ENCODE measurements at regions of chr5 and their contacts with region 1.

Region 1: DNA sequence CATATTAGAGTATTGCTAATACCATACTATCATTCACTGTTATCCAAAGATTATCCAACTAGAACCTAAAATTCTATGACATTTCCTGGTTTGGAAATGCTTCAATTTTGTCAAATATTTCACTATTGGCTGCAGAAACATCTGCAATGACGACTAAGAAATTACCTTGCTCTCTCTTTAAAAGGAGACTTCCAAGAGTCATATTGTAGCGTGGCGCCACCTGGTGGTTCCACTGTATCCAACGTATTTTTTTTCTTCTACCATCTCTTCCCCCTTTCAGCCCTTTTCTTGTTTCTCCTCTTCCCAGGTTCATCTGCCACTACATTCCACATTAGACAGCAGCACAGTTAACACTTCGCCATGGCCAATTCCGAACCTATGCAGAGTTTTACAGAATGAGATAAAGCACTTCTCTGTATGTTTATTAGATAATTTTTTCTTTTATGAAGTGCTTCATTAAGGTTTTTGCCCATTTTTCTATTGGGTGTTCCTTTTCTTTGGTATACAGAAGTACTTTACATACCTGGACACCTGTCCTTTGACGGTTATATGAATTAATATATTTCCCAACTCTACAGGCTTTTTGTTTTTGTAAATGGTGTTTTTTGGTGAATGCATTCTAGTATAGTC is 153.5 kb downstream of the CDC42SE2 start:
- DNase-seq: peak; percentile 67 to 78
- ATAC-seq: peak in 3 of 4 donors; percentile 57 to 76 (median 58)
- H3K4me3 ChIP-seq: no peak overlapping the region
- H3K27ac ChIP-seq: no peak overlapping the region
- H3K4me1 ChIP-seq: no peaks in the 10 kb centered on the region
- H3K27me3 ChIP-seq: no peaks in the 10 kb centered on the region
- CTCF ChIP-seq: peak; percentile 81

Region 2: GRCh38 chr5:131165119-131165727 is 252.1 kb before region 1 on chr5 and contains the start of gene HINT1:
- intact Hi-C with region 1: loop called (anchors 5 to 10 kb)
- DNase-seq: peak; percentile 92 to 96
- ATAC-seq: peak; percentile 89 to 93 (median 91)
- H3K4me3 ChIP-seq: peak within 1 kb of the TSS; percentile 85
- H3K27ac ChIP-seq: peak within 1 kb of the TSS; percentile 97
- H3K4me1 ChIP-seq: peaks cover 13% of the 10 kb centered on the region
- H3K27me3 ChIP-seq: no peaks in the 10 kb centered on the region
- CTCF ChIP-seq: no peak
- total RNA-seq, gene HINT1: 205 to 331 (median 236) TPM

Region 3: GRCh38 chr5:131263648-131264450 is 153.5 kb before region 1 on chr5 and contains the start of gene CDC42SE2:
- intact Hi-C with region 1: loop called in 1 of 2 experiments (anchors 10 kb)
- DNase-seq: peak; percentile 87 to 91
- ATAC-seq: peak; percentile 96 to 99 (median 99)
- H3K4me3 ChIP-seq: peak within 1 kb of the TSS; percentile 99
- H3K27ac ChIP-seq: peak within 1 kb of the TSS; percentile 88
- H3K4me1 ChIP-seq: peaks cover 28% of the 10 kb centered on the region
- H3K27me3 ChIP-seq: no peaks in the 10 kb centered on the region
- CTCF ChIP-seq: no peak
- total RNA-seq, gene CDC42SE2: 8.5 to 11.9 (median 10.5) TPM

Region 4: GRCh38 chr5:131436081-131436480 is 18.7 kb after region 1 on chr5:
- intact Hi-C with region 1: no loop called
- DNase-seq: peak in 1 of 2 donors; percentile 56
- ATAC-seq: peak in 2 of 4 donors; percentile 70 to 86
- H3K4me3 ChIP-seq: no peak overlapping the region
- H3K27ac ChIP-seq: no peak overlapping the region
- H3K4me1 ChIP-seq: no peaks in the 10 kb centered on the region
- H3K27me3 ChIP-seq: no peaks in the 10 kb centered on the region
- CTCF ChIP-seq: no peak

Measured in psoas muscle (tissue), 8 donors.